Posterior vena cava (tissue), 2 donors: ENCODE measurements at regions of chr15 and their contacts with region 1.

Region 1: GRCh38 chr15:46312133-46312740 is 677.4 kb downstream of the SQOR start:
- DNase-seq: no peak

Region 2: DNA sequence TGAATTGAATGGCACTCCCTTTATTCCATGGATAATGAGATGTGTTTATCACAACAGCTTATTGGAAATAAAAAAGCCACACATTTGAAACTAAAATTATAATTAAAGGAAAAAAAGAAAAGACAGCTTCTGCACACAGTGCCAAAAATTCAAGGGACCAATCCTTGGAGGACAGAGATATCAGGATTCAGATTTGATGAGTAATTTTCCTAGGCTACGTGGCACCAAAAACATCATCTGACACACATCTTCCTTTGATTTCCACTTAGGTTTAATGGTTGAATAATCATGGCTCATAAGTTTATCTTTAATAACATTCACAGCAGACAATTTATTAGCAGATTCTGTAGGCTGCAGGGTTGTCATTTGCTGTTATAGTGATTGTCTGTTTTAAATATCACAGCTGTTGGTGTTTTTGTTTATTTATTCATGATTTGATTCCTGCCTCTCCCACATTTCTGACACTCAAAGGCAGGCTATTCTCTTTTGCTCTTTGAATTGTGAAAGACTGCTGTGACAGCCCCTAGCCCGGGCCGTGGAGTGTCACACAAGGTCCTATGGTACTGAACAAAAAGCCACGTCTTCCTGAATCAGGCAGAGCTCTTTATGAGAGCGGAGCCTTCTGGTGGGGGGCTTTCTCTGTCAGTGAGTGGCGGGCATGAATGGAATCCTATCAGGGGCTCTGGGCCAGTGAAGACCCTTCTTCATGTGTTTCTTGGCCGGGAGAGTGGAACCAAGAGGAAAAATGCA is 31.1 kb after region 1 on chr15:
- intact Hi-C with region 1: loop called in 1 of 2 experiments (anchors 2 kb)
- DNase-seq: no peak

Region 3: DNA sequence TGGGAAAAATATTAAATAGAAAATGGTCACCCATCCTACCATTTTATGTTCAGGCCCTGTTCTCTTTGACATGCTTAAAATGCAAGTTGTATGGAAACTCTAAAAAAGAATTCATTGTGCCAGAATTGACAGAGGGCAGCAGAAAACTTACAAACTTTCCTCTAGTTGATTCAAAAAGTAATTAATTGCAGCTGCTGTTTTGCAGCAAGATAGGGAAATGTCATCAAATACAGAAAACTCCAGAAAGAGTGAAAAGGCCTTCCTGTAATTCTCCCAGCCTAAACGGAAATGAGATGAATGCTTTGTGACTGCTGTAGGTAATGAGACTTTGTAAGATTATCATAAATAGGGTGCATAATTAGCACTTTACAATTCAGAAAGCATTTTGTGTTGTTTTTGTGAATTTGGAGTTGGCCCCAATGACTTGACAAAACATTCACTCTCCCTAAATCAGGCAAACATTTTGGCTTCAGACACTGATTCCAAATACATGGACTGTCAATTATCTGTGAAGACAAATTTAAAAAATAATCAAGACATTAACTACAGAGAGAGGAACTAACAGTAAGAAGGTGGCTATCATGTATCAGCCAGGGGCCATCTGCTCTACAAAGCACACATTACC is 184.4 kb after region 1 on chr15:
- intact Hi-C with region 1: loop called in 1 of 2 experiments (anchors 10 kb)
- DNase-seq: no peak